PC-3 (cell line): ENCODE measurements at regions of chr15 and their contacts with region 1.

Region 1: GRCh38 chr15:93307513-93307912 is 218.5 kb upstream of the RGMA start:
- DNase-seq: no peak
- ATAC-seq: no peak
- H3K4me3 ChIP-seq: no peak overlapping the region
- H3K27ac ChIP-seq: no peak overlapping the region
- H3K4me1 ChIP-seq: no peaks in the 10 kb centered on the region
- H3K27me3 ChIP-seq: peaks cover 63% of the 10 kb centered on the region
- CTCF ChIP-seq: no peak

Region 2: DNA sequence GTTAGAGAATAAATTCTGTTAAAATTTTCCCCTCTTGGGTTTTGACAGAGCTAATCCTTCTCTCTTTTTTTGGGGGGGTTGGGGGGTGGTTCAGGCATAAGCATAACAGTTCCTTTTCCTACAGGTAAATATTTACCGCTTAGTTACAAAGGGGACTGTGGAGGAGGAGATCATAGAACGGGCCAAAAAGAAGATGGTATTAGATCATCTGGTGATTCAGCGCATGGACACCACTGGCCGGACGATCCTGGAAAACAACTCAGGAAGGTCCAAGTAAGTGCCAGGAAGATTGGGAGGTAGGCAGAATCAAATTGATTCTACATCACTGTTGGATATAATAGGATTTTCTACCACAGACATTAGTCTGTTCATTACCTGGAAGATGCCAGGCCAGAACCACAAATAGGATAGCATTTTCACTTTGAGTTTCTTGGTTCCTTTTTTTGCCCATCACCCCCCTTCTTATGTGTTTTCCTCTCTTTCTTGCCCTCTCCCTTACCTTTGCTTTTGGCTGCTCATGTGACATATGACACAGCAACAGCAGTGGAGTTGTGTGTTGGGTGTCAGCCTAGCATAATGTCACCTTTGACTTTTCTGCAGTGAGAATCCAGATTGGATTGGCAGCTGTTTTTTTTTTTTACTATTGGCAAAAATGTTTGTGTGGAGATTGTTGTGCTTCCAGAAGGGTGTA is 328.4 kb before region 1 on chr15:
- CTCF ChIA-PET with region 1: no interaction called
- POLR2A ChIA-PET with region 1: no interaction called
- intact Hi-C with region 1: no loop called
- DNase-seq: peak; percentile 80
- ATAC-seq: peak; percentile 66
- H3K4me3 ChIP-seq: peak overlapping the region; percentile 17; the same call in 1 of the 2 replicates
- H3K27ac ChIP-seq: peak overlapping the region; percentile 98
- H3K4me1 ChIP-seq: peaks cover 44% of the 10 kb centered on the region
- H3K27me3 ChIP-seq: no peaks in the 10 kb centered on the region
- CTCF ChIP-seq: no peak

Region 3: DNA sequence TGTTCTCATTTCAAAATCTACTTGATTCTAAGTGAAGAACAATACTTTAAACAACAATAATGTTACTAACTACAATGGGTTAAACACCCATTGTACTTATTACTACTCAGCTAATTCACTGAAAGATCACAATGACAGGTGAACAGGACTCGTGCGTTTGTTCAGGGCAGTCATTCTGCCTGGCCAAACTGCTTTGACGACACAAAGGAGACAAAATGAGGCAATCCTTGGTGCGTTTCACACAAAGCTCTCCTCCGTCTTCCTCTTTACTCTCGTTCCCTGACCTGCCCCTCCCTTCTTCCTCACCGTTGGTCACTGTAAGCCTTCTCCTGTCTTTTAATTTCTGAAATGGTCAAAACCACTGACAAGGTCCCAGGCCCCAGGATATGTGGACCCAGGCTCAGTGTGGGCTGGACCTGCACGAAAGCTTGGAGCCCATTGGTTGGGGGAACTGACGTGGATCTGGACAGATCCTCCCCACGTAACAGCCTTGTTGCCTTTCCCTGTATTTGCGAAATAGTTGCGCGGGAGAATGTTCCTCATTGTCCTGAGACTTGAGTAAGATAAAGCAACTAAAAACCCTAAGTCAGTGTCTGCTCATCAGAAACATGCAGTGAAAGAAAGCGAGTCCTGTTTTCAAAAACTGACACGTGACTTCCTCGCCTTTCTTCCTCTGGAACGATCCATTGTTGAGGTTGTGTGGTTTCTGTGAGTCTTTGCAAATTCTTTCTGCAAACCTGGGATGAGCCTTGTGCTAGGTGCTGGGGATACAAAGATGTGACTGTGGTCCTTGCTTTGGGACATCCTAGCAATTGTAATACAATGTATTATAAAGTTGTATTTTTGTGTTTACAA is 71.4 kb before region 1 on chr15:
- CTCF ChIA-PET with region 1: no interaction called
- POLR2A ChIA-PET with region 1: no interaction called
- intact Hi-C with region 1: no loop called
- DNase-seq: no peak
- ATAC-seq: no peak
- H3K4me3 ChIP-seq: no peak overlapping the region
- H3K27ac ChIP-seq: no peak overlapping the region
- H3K4me1 ChIP-seq: no peaks in the 10 kb centered on the region
- H3K27me3 ChIP-seq: peaks cover 52% of the 10 kb centered on the region
- CTCF ChIP-seq: no peak

Region 4: GRCh38 chr15:93333796-93334195 is 26.3 kb after region 1 on chr15:
- CTCF ChIA-PET with region 1: no interaction called
- POLR2A ChIA-PET with region 1: no interaction called
- intact Hi-C with region 1: loop called (anchors 2 kb)
- DNase-seq: no peak
- ATAC-seq: no peak
- H3K4me3 ChIP-seq: no peak overlapping the region
- H3K27ac ChIP-seq: no peak overlapping the region
- H3K4me1 ChIP-seq: no peaks in the 10 kb centered on the region
- H3K27me3 ChIP-seq: peaks cover 43% of the 10 kb centered on the region
- CTCF ChIP-seq: no peak; the same call in 1 of the 2 replicates

Region 5: GRCh38 chr15:93485438-93486327 is 178.2 kb after region 1 on chr15:
- CTCF ChIA-PET with region 1: no interaction called
- POLR2A ChIA-PET with region 1: no interaction called
- intact Hi-C with region 1: no loop called
- DNase-seq: no peak
- ATAC-seq: no peak
- H3K4me3 ChIP-seq: no peak overlapping the region
- H3K27ac ChIP-seq: no peak overlapping the region
- H3K4me1 ChIP-seq: no peaks in the 10 kb centered on the region
- H3K27me3 ChIP-seq: no peaks in the 10 kb centered on the region
- CTCF ChIP-seq: no peak